ENCODE measurements at regions of chr11 and their contacts with region 1.

Region 1: GRCh38 chr11:118791111-118791965 is at the start of gene DDX6:
- DNase-seq: peak; percentile 83 to 94 (median 90)
- H3K4me3 ChIP-seq: peak within 1 kb of the TSS; percentile 64 to 98 (median 87)
- H3K27ac ChIP-seq: peak within 1 kb of the TSS; percentile 94 to 100 (median 99)
- H3K27me3 ChIP-seq: no peaks in the 10 kb centered on the region
- CTCF ChIP-seq: peak in 30 of 56 donors; percentile 18 to 52 (median 38)
- total RNA-seq, gene DDX6: 139 to 229 (median 190) TPM

Region 2: GRCh38 chr11:118610804-118611795 is 180.2 kb before region 1 on chr11:
- intact Hi-C with region 1: loop called in 1 of 2 experiments (anchors 5 kb)
- DNase-seq: peak; percentile 69 to 86 (median 78)
- H3K4me3 ChIP-seq: peak overlapping the region; percentile 42 to 91 (median 63)
- H3K27ac ChIP-seq: peak overlapping the region; percentile 84 to 99 (median 97)
- H3K27me3 ChIP-seq: no peaks in the 10 kb centered on the region
- CTCF ChIP-seq: peak; percentile 77 to 97 (median 89)

Region 3: DNA sequence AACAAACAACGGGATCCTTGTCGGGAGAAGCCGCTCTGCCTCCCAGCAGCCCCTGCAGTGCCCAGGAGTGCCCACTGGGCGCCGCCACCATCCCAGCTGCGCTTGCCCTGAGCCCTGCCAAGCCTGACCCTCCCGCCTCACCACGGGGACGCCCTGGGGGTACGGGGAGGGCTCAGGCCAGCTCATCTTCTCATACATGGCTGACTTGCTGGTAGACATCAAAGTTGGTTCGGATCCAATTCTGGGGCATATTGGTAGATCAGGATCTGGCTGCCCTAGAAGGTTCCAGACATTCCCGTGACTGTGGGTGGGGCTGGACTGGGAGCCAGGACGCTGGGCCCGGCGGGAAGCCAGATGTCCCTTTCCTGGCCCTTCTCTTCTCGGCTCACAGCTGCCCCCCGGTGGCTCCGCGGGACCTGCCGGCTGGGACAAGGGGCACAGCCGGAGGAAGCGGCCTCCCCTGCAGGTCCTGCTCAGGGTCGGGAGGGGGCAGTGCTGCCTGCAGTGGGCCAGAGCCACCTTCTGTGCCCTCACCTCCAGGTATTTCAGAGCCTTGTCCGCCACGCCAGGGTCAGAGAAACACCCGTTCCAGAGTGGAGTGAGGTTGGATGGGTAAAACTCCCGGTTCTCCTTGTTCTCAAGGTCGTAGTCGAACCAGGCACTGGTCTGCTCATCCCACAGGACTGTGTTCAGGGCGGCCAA is 101.3 kb before region 1 on chr11:
- intact Hi-C with region 1: loop called (anchors 1 kb)
- DNase-seq: peak; percentile 83 to 96 (median 93)
- H3K4me3 ChIP-seq: peak overlapping the region; percentile 20 to 65 (median 52)
- H3K27ac ChIP-seq: peak overlapping the region; percentile 23 to 98 (median 93)
- H3K27me3 ChIP-seq: no peaks in the 10 kb centered on the region
- CTCF ChIP-seq: peak; percentile 53 to 96 (median 82)

Region 4: DNA sequence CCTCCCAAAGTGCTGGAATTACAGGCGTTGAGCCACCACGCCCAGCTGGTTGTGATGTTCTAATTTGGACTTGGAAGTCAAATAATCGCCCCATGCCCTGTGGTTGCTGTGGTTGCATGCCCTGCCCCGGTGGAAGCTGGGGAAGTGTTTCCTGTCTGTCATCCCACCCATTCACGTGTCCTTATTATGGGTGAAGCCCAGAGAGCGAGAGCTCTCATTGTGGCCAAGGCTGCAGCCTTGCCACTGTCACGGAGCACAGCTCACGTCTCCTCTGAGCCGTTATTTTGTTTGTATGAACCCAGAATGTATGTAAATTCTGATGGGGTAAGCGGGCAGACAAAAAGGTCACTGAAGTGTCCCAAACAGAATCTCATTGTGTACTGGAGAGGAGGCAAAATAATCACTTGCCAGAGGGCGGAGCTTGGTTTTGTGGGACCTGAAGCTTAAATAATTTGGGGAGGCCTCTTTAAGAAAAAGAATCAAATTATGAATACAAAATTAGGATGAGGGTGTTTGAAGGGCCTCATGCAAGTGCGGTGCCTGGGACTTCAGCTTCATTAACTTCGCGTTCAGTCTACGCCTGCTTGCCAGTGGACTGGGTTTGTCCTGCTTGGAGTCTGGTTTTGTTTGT is 86.1 kb before region 1 on chr11:
- intact Hi-C with region 1: loop called (anchors 5 kb)
- DNase-seq: peak in 8 of 10 donors; percentile 37 to 65 (median 56)
- H3K4me3 ChIP-seq: peak overlapping the region in 39 of 59 donors; percentile 0 to 55 (median 22)
- H3K27ac ChIP-seq: peak overlapping the region in 58 of 59 donors; percentile 11 to 92 (median 80)
- H3K27me3 ChIP-seq: no peaks in the 10 kb centered on the region
- CTCF ChIP-seq: peak in 7 of 56 donors; percentile 4 to 27 (median 13)

Region 5: DNA sequence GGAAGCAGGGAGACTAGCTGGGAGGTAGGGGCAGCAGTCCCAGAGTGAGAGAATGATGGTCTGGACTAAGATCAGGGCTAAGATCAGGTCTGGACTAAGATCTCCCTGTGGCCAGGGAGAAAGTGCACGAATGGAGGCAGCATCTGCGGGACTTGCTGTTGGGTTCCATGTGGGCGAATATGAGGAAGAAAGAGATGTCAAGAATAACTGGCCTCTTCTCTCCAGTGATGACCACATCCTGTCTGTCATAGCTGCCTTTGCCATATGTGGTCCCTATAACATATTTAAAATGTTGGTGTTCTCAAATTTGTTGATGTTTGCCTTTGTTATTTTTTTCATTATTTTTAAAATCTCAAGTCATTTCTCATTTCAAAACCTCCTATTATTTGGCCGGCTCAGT is 65.0 kb after region 1 on chr11:
- intact Hi-C with region 1: no loop called
- DNase-seq: no peak
- H3K4me3 ChIP-seq: no peak overlapping the region
- H3K27ac ChIP-seq: no peak overlapping the region
- H3K27me3 ChIP-seq: no peaks in the 10 kb centered on the region
- CTCF ChIP-seq: no peak

Region 6: GRCh38 chr11:118928108-118928870 is 137.0 kb after region 1 on chr11:
- intact Hi-C with region 1: loop called (anchors 5 kb)
- DNase-seq: peak; percentile 84 to 96 (median 92)
- H3K4me3 ChIP-seq: peak overlapping the region; percentile 65 to 100 (median 82)
- H3K27ac ChIP-seq: peak overlapping the region; percentile 83 to 100 (median 98)
- H3K27me3 ChIP-seq: no peaks in the 10 kb centered on the region
- CTCF ChIP-seq: peak; percentile 84 to 98 (median 94)

Region 7: GRCh38 chr11:118956094-118956846 is 164.9 kb after region 1 on chr11 and contains the start of gene UPK2:
- intact Hi-C with region 1: loop called in 1 of 2 experiments (anchors 10 kb)
- DNase-seq: peak; percentile 85 to 94 (median 92)
- H3K4me3 ChIP-seq: peak within 1 kb of the TSS in 1 of 59 donors; percentile 8
- H3K27ac ChIP-seq: peak within 1 kb of the TSS in 1 of 59 donors; percentile 27
- H3K27me3 ChIP-seq: peaks cover 0 to 2% (median 0%) of the 10 kb centered on the region in 45 donors
- CTCF ChIP-seq: peak; percentile 86 to 99 (median 98)
- total RNA-seq, gene UPK2: 0.43 to 1.2 (median 0.59) TPM in 27 of 120 experiments, not detected in the others

Region 8: GRCh38 chr11:119041821-119042514 is 250.6 kb after region 1 on chr11:
- intact Hi-C with region 1: no loop called
- DNase-seq: no peak
- H3K4me3 ChIP-seq: no peak overlapping the region
- H3K27ac ChIP-seq: no peak overlapping the region
- H3K27me3 ChIP-seq: no peaks in the 10 kb centered on the region
- CTCF ChIP-seq: no peak

Region 9: DNA sequence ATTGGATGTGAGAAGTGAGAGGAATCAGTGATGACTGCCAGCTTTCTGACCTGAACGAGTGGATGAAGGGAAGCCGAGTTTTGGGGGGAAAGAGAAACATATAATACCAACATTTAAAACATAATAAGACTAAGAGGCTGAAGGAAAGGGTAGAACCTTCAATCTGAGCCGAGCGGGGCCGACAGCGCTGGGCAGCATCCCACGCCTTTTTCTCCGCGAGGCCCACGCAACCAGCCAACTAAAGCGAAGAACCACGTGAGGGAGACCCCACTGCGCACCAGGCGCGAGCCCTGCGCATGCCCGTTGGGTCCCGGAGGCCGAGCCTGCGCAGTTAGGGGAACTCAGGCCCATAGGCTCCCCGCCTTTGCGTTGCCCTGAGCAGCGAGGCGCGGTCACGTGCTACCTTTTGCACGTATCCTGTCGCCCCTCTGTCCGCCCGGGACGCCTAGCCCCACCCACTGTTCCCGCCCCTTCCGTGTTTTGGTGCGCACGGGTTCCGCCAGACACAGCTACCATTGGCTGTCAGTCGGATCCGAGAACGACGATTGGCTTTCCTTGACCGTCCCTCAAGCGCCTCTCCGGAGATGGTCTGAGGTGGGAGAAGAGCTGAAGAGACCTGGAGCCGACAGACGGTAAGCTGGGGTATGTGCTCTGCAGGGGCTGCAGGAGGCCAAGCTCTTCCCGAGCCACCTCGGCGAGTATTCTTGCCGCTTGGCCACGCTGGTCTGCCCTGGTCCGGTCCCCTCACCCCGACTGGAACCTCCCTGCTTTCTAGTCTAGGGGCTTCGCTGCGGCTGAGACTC is 329.9 kb after region 1 on chr11 and contains the start of gene HINFP:
- intact Hi-C with region 1: no loop called
- DNase-seq: peak; percentile 99 to 100 (median 100)
- H3K4me3 ChIP-seq: peak within 1 kb of the TSS; percentile 67 to 99 (median 93)
- H3K27ac ChIP-seq: peak within 1 kb of the TSS; percentile 57 to 97 (median 91)
- H3K27me3 ChIP-seq: no peaks in the 10 kb centered on the region
- CTCF ChIP-seq: peak in 26 of 56 donors; percentile 6 to 55 (median 22)
- total RNA-seq, gene HINFP: 29.8 to 70.5 (median 47.9) TPM